HepG2 (cell line): ENCODE measurements at regions of chr1 and their contacts with region 1.

Region 1: GRCh38 chr1:226062558-226063223 is at the start of gene H3-3A:
- DNase-seq: peak; percentile 87
- ATAC-seq: peak; percentile 81
- H3K4me3 ChIP-seq: peak within 1 kb of the TSS; percentile 92 to 97 (median 95)
- H3K27ac ChIP-seq: peak within 1 kb of the TSS; percentile 99
- H3K4me1 ChIP-seq: peaks cover 39% of the 10 kb centered on the region
- H3K27me3 ChIP-seq: no peaks in the 10 kb centered on the region; a peak in 1 of 5 replicates
- CTCF ChIP-seq: peak; percentile 13; the same call in 1 of the 2 replicates
- EP300 ChIP-seq: no peak
- POLR2A ChIP-seq: peak; percentile 89 to 93
- RAD21 ChIP-seq: peak; percentile 39
- total RNA-seq, gene H3-3A: 221 and 312 TPM in 2 replicates

Region 2: GRCh38 chr1:225999227-225999911 is 63.3 kb before region 1 on chr1 and contains the start of gene SDE2:
- CTCF ChIA-PET with region 1: no interaction called
- POLR2A ChIA-PET with region 1: interaction called, 45 read pairs
- in situ Hi-C with region 1: no loop called
- intact Hi-C with region 1: loop called (anchors 2 kb)
- DNase-seq: peak; percentile 95
- ATAC-seq: peak; percentile 93
- H3K4me3 ChIP-seq: peak within 1 kb of the TSS; percentile 74 to 88 (median 86)
- H3K27ac ChIP-seq: peak within 1 kb of the TSS; percentile 76
- H3K4me1 ChIP-seq: peaks cover 66% of the 10 kb centered on the region
- H3K27me3 ChIP-seq: no peaks in the 10 kb centered on the region; a peak in 1 of 5 replicates
- CTCF ChIP-seq: no peak
- EP300 ChIP-seq: no peak
- POLR2A ChIP-seq: peak; percentile 94 to 99
- RAD21 ChIP-seq: no peak
- total RNA-seq, gene SDE2: 19.6 and 24.7 TPM in 2 replicates

Region 3: GRCh38 chr1:226046240-226046639 is 16.5 kb before region 1 on chr1:
- CTCF ChIA-PET with region 1: no interaction called
- POLR2A ChIA-PET with region 1: interaction called, 15 read pairs
- in situ Hi-C with region 1: no loop called
- intact Hi-C with region 1: no loop called
- DNase-seq: peak; percentile 73
- ATAC-seq: peak; percentile 91
- H3K4me3 ChIP-seq: no peak overlapping the region
- H3K27ac ChIP-seq: no peak overlapping the region
- H3K4me1 ChIP-seq: peaks cover 23% of the 10 kb centered on the region
- H3K27me3 ChIP-seq: no peaks in the 10 kb centered on the region
- CTCF ChIP-seq: no peak
- EP300 ChIP-seq: no peak
- POLR2A ChIP-seq: no peak
- RAD21 ChIP-seq: no peak

Region 4: DNA sequence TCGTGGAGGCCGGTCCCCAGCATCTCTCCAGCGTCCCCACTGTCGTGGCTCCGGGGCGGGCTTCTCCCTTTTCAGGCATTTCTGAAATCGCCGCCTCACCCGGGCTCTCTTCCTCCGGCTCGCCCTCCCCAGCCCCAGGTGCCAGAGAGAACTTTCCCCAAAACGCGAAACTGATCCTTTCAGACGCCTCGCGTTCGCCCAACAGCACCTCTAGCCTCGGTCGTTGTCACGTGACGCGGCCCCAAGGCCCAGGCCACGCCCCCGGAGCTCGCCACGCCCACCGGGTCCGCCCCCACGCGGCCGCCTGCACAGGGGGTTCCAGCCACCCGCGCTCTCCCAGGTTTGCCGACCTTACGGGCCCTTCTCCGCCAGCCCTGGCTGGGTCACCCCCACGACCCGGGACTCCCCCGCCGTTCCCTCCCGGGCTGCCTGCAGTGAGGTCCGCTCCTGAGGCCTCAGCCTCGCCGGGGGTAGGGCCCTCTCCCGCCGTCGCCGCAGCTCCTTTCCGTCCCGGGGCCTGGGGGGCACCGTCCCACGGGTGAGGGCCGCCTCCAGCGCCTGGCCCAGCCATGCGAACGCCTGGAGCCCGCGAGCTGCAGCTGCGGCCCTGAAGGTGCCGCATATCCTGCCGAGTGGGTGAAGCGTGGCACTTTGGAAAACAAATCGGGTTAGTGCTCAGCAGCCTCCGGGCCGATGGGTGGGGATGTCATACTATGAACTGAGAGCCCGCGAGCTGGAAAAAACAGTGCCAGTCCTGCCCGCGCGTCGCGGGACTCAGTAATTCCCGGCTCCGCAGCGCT is 20.8 kb after region 1 on chr1:
- CTCF ChIA-PET with region 1: no interaction called
- POLR2A ChIA-PET with region 1: interaction called, 36 read pairs
- in situ Hi-C with region 1: no loop called
- intact Hi-C with region 1: no loop called
- DNase-seq: peak; percentile 56
- ATAC-seq: peak; percentile 84
- H3K4me3 ChIP-seq: peak overlapping the region; percentile 56 to 74 (median 73)
- H3K27ac ChIP-seq: no peak overlapping the region
- H3K4me1 ChIP-seq: peaks cover 14% of the 10 kb centered on the region
- H3K27me3 ChIP-seq: peaks cover 0 to 6% of the 10 kb centered on the region in 2 experiments; a peak in 2 of 5 replicates
- CTCF ChIP-seq: no peak
- EP300 ChIP-seq: no peak
- POLR2A ChIP-seq: peak in 1 of 2 experiments; percentile 68; a peak in 2 of 4 replicates
- RAD21 ChIP-seq: no peak

Region 5: GRCh38 chr1:226116673-226117072 is 54.0 kb after region 1 on chr1:
- CTCF ChIA-PET with region 1: interaction called, 32 read pairs
- POLR2A ChIA-PET with region 1: interaction called, 22 read pairs
- in situ Hi-C with region 1: no loop called
- intact Hi-C with region 1: loop called (anchors 2 kb)
- DNase-seq: no peak
- ATAC-seq: no peak
- H3K4me3 ChIP-seq: no peak overlapping the region
- H3K27ac ChIP-seq: no peak overlapping the region
- H3K4me1 ChIP-seq: peaks cover 48% of the 10 kb centered on the region
- H3K27me3 ChIP-seq: peaks cover 2 to 51% of the 10 kb centered on the region in 2 experiments; a peak in 4 of 5 replicates
- CTCF ChIP-seq: no peak
- EP300 ChIP-seq: no peak
- POLR2A ChIP-seq: no peak
- RAD21 ChIP-seq: no peak